ENCODE measurements at regions of chr5 and their contacts with region 1.

Region 1: GRCh38 chr5:145825751-145826180 is 9.4 kb downstream of the PRELID2 start:
- H3K4me3 ChIP-seq: no peak overlapping the region
- H3K27ac ChIP-seq: no peak overlapping the region
- H3K4me1 ChIP-seq: peaks cover 16% of the 10 kb centered on the region
- CTCF ChIP-seq: peak; percentile 63

Region 2: DNA sequence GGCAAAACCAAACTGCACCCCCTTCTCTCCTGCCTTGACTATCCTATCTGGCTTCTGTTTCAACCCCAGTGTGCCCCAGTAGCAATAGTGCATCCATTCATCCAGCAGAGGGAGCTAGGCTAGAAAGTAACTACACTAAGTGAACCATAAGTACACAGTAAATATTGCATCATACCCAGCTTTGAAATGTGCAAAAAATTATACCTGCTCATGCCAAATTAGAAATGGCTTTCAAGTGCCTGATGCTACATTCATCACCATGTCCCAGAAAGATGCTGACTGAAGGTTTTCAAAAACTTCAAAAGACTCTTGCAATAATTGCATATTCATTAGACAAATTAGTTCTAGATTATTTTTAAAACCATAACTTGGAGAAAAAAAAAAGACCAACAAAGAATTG is 144.1 kb before region 1 on chr5:
- CTCF ChIA-PET with region 1: interaction called, 11 read pairs
- POLR2A ChIA-PET with region 1: no interaction called
- H3K4me3 ChIP-seq: no peak overlapping the region
- H3K27ac ChIP-seq: no peak overlapping the region
- H3K4me1 ChIP-seq: no peaks in the 10 kb centered on the region; the same call in 1 of the 2 replicates
- CTCF ChIP-seq: no peak

Region 3: DNA sequence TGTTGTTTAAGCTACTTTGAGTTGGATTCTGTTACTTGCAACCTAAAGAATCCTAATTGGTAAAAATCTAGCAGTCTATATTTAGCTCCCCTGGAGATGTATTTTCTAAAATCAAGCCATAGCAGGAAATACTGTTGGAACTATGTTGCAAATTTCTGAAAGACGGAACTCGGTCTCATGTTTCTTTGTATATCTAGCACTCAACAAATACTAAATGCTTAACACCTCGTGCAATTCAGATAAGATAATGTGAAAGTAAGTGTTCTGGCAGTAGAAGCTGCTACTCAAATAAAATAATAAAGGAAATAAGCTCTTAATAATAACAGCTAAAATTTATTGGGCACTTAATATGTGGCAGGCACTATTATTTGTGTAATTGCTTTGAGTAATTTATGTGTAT is 20.3 kb after region 1 on chr5:
- CTCF ChIA-PET with region 1: interaction called, 10 read pairs
- POLR2A ChIA-PET with region 1: no interaction called
- H3K4me3 ChIP-seq: no peak overlapping the region
- H3K27ac ChIP-seq: no peak overlapping the region
- H3K4me1 ChIP-seq: no peaks in the 10 kb centered on the region
- CTCF ChIP-seq: no peak

Region 4: GRCh38 chr5:145887976-145888574 is 62.3 kb after region 1 on chr5:
- CTCF ChIA-PET with region 1: interaction called, 13 read pairs
- POLR2A ChIA-PET with region 1: no interaction called
- H3K4me3 ChIP-seq: no peak overlapping the region
- H3K27ac ChIP-seq: no peak overlapping the region
- H3K4me1 ChIP-seq: no peaks in the 10 kb centered on the region
- CTCF ChIP-seq: no peak

Region 5: GRCh38 chr5:145946112-145946861 is 120.5 kb after region 1 on chr5:
- CTCF ChIA-PET with region 1: no interaction called
- POLR2A ChIA-PET with region 1: no interaction called
- H3K4me3 ChIP-seq: no peak overlapping the region
- H3K27ac ChIP-seq: peak overlapping the region; percentile 57
- H3K4me1 ChIP-seq: peaks cover 24% of the 10 kb centered on the region
- CTCF ChIP-seq: no peak

Region 6: DNA sequence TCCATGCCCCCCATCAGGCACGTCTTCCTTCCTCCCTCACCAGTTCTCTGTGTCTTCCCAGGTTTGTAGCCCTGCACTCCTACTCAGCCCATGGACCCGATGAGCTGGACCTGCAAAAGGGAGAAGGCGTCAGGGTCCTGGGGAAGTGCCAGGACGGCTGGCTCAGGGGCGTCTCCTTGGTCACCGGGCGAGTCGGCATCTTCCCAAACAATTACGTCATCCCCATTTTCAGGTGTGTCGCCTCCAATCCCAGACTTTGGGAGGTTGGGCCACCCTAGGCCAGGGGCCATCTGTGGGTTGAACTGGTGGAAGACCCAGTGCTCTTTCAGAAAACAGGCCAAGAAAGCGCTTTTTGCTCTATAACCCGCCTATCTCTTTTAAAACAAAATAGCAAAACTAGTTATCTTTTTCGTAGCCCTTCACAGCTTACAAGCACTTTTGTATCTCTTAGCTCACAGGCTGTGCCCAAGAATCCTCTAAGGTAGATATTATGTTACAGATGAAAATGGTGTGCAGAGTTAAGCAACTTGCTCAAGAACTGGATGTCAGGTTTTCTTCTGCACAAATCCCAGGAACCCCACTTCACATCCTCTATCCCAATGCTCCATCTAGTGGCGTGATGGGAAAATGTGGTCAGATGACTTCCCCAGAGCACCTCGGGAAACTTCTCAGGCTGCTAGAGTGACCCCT is 223.4 kb after region 1 on chr5:
- CTCF ChIA-PET with region 1: interaction called, 26 read pairs
- POLR2A ChIA-PET with region 1: no interaction called
- H3K4me3 ChIP-seq: no peak overlapping the region
- H3K27ac ChIP-seq: no peak overlapping the region
- H3K4me1 ChIP-seq: peaks cover 2% of the 10 kb centered on the region; the same call in 1 of the 2 replicates
- CTCF ChIP-seq: peak; percentile 80

Measured in HEK293 (cell line).